B cell (primary cell): ENCODE measurements at regions of chr1 and their contacts with region 1.

Region 1: DNA sequence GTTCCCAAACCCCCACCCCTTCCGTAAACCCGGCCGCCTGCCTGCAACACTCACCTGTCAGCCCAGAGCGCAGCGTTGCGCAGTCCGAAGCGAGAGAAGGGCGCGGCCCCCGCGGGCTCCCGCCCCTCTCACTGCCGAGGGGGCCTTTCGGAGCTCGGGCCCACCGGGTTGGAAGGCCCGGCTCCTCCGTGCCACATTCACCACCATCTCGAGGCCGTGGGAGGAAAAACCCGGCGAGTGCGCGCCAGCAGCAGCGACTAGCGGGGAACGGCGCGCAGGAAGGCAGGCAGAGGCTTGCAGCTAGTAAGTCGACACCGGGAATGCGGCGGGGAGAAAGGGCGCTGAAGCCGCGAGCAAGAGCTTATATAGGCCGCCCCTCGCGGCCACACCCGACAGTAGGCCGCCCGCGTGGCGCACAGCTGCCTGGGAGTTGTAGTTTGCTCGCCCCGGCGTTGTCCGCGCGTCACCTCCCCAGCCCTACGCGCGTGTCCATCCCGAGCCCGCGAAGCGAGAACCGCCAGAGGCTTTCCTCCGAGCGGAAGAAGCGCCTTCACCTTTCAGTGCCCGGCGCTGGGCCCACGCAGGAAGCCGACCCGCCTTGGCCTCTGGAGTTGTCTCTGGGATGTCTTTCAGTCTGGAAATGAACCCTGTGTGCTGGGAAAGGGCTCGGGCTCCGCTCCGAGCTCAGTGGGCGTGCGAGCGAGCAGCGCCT is 10.4 kb upstream of the RAB42 start:
- DNase-seq: peak; percentile 96
- ATAC-seq: peak; percentile 92
- H3K4me3 ChIP-seq: peak overlapping the region; percentile 69 to 99 (median 94)
- H3K4me3 Mint-ChIP-seq: peak overlapping the region; percentile 96
- H3K27ac ChIP-seq: peak overlapping the region; percentile 69 to 82
- H3K27ac Mint-ChIP-seq: peak overlapping the region; percentile 95
- H3K4me1 ChIP-seq: peaks cover 15 to 35% of the 10 kb centered on the region in 2 donors
- H3K4me1 Mint-ChIP-seq: peaks cover 40% of the 10 kb centered on the region
- H3K27me3 ChIP-seq: no peaks in the 10 kb centered on the region
- H3K27me3 Mint-ChIP-seq: no peaks in the 10 kb centered on the region
- CTCF ChIP-seq: peak; percentile 7

Region 2: GRCh38 chr1:28329395-28330153 is 252.1 kb before region 1 on chr1:
- CTCF ChIA-PET with region 1: interaction called, 3 read pairs
- POLR2A ChIA-PET with region 1: interaction called, 8 read pairs
- intact Hi-C with region 1: loop called (anchors 1 kb)
- DNase-seq: peak; percentile 67
- ATAC-seq: no peak
- H3K4me3 ChIP-seq: peak overlapping the region; percentile 72 to 93 (median 80)
- H3K4me3 Mint-ChIP-seq: peak overlapping the region; percentile 91
- H3K27ac ChIP-seq: peak overlapping the region; percentile 91 to 99
- H3K27ac Mint-ChIP-seq: peak overlapping the region; percentile 99
- H3K4me1 ChIP-seq: peaks cover 34 to 41% of the 10 kb centered on the region in 2 donors
- H3K4me1 Mint-ChIP-seq: peaks cover 45% of the 10 kb centered on the region
- H3K27me3 ChIP-seq: no peaks in the 10 kb centered on the region
- H3K27me3 Mint-ChIP-seq: no peaks in the 10 kb centered on the region
- CTCF ChIP-seq: no peak

Region 3: GRCh38 chr1:28518000-28518744 is 63.5 kb before region 1 on chr1:
- CTCF ChIA-PET with region 1: interaction called, 11 read pairs
- POLR2A ChIA-PET with region 1: interaction called, 5 read pairs
- intact Hi-C with region 1: loop called (anchors 1 kb)
- DNase-seq: peak; percentile 93
- ATAC-seq: peak; percentile 94
- H3K4me3 ChIP-seq: peak overlapping the region; percentile 53 to 68 (median 55)
- H3K4me3 Mint-ChIP-seq: peak overlapping the region; percentile 89
- H3K27ac ChIP-seq: peak overlapping the region in 1 of 2 donors; percentile 45
- H3K27ac Mint-ChIP-seq: peak overlapping the region; percentile 89
- H3K4me1 ChIP-seq: peaks cover 11 to 18% of the 10 kb centered on the region in 2 donors
- H3K4me1 Mint-ChIP-seq: peaks cover 30% of the 10 kb centered on the region
- H3K27me3 ChIP-seq: no peaks in the 10 kb centered on the region
- H3K27me3 Mint-ChIP-seq: no peaks in the 10 kb centered on the region
- CTCF ChIP-seq: peak; percentile 98

Region 4: DNA sequence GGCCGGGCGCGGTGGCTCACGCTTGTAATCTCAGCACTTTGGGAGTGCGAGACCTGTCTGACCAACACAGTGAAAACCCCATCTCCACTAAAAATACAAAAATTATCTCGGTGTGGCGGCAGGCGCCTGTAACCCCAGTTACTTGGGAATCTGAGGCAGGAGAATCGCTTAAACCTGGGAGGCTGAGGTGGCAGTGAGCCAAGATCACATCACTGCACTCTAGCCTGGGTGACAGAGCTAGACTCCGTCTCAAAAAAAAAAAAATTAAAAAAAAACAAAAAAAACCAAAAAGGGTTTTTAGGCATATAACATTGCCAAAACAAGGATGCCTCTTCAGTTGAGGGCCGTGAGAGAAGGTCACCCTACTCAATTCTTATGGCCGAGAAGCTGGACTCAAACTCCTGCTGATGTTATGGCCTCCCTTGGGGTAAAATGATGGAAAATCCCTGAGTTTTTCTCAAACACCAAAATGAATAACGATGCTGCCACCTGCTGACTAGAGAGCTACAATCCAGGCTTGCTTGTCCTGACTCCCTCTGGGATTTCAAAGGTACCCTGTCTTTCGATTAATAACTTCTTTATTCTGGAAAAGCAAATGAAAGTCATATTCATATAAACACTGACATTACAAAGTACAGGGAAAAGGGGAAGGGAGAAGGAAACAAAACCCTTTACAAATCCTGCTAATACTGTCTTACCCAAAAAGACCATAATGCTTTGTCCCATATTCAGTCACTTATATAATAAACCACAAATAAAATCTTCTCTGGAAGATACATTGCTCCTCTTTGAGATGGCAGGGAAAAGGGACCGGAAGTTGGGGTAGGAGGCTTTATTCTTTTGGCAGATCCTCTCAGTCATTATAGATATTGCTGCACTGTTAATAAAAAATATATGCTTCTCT is 21.1 kb after region 1 on chr1:
- CTCF ChIA-PET with region 1: interaction called, 13 read pairs
- POLR2A ChIA-PET with region 1: interaction called, 4 read pairs
- intact Hi-C with region 1: no loop called
- DNase-seq: peak; percentile 57
- ATAC-seq: peak; percentile 28
- H3K4me3 ChIP-seq: no peak overlapping the region
- H3K4me3 Mint-ChIP-seq: no peak overlapping the region
- H3K27ac ChIP-seq: no peak overlapping the region
- H3K27ac Mint-ChIP-seq: no peak overlapping the region
- H3K4me1 ChIP-seq: no peaks in the 10 kb centered on the region
- H3K4me1 Mint-ChIP-seq: no peaks in the 10 kb centered on the region
- H3K27me3 ChIP-seq: no peaks in the 10 kb centered on the region
- H3K27me3 Mint-ChIP-seq: no peaks in the 10 kb centered on the region
- CTCF ChIP-seq: peak; percentile 45

Region 5: DNA sequence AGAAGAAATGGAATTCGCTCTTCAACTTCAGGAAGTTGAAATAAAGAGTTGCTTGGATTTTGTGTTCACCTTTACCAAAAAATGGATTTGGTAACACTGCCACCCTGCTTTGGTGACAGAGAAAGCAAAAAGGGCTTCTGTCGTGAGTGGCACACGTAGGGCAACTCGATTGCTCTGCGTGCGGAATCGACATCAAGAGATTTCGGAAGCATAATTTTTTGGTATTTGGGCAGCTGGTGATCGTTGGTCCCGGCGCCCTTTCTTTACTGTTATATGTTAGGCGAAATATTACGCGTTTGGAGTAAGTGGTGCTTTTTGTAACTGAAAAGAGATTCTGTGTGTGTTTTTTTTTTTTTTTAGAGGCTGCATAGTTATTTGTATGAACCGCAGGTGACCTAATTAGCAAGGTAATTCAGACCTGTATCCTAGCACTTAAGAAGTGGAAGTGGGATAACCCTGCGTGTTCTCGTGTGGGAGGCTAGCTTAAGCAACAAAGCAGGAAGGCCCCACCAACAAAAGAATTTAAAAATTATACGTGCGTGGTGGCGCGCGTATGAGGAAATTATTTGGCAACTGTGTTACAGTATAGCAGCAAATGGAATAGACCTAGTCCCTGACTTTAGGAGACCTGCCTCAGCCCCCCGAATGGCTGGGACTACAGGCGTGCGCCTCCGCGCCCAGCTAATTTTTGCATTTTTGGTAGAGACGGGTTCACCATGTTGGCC is 66.9 kb after region 1 on chr1 and contains the start of gene RNU11:
- CTCF ChIA-PET with region 1: interaction called, 6 read pairs
- POLR2A ChIA-PET with region 1: interaction called, 36 read pairs
- intact Hi-C with region 1: loop called (anchors 1 kb)
- DNase-seq: peak; percentile 98
- ATAC-seq: peak; percentile 72
- H3K4me3 ChIP-seq: peak within 1 kb of the TSS; percentile 9 to 60 (median 53)
- H3K4me3 Mint-ChIP-seq: peak within 1 kb of the TSS; percentile 94
- H3K27ac ChIP-seq: peak within 1 kb of the TSS; percentile 93 to 100
- H3K27ac Mint-ChIP-seq: peak within 1 kb of the TSS; percentile 100
- H3K4me1 ChIP-seq: peaks cover 25 to 33% of the 10 kb centered on the region in 2 donors
- H3K4me1 Mint-ChIP-seq: peaks cover 32% of the 10 kb centered on the region
- H3K27me3 ChIP-seq: no peaks in the 10 kb centered on the region
- H3K27me3 Mint-ChIP-seq: no peaks in the 10 kb centered on the region
- CTCF ChIP-seq: no peak
- total RNA-seq, gene RNU11: not detected in 2 replicates

Region 6: DNA sequence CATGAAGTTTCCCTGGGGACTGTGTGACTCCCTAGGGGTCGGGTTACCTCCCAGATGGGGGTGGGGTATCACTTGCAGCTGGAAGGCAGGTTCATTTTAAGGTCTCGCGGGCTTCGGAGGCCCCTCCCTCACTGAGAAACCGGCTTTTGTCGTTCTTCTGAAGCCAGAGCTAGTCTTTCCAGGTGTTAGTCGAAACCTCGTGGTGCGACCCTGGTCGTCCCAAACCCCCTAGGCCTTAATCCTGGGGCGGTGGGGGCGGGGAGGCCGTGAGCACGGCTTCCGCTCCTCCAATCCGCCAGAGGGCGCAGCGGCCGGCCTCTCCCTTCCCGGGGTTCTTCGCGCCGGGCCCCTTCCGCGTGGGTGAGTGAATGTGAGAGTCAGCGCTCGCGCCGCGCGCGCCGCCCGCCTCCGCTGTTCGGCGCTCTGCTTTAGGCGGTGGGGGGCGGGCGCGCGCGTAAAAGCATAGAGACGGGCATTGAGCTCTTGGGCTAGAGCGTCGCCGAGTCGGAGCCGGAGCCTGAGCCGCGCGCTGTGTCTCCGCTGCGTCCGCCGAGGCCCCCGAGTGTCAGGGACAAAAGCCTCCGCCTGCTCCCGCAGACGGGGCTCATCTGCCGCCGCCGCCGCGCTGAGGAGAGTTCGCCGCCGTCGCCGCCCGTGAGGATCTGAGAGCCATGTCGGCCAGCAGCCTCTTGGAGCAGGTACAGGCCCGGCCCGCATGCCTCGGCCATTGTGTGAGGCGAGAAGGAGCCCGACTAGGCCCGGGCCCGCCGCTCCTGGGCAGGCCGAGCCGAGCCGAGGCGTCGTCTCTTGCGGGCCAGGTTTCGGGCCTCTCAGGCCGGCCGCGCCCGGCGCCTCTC is 155.0 kb after region 1 on chr1 and contains the start of gene YTHDF2:
- CTCF ChIA-PET with region 1: interaction called, 8 read pairs
- POLR2A ChIA-PET with region 1: interaction called, 19 read pairs
- intact Hi-C with region 1: loop called (anchors 1 kb)
- DNase-seq: peak; percentile 99
- ATAC-seq: peak; percentile 91
- H3K4me3 ChIP-seq: peak within 1 kb of the TSS; percentile 75 to 91 (median 84)
- H3K4me3 Mint-ChIP-seq: peak within 1 kb of the TSS; percentile 95
- H3K27ac ChIP-seq: peak within 1 kb of the TSS; percentile 92 to 94
- H3K27ac Mint-ChIP-seq: peak within 1 kb of the TSS; percentile 95
- H3K4me1 ChIP-seq: peaks cover 16 to 23% of the 10 kb centered on the region in 2 donors
- H3K4me1 Mint-ChIP-seq: peaks cover 39% of the 10 kb centered on the region
- H3K27me3 ChIP-seq: no peaks in the 10 kb centered on the region
- H3K27me3 Mint-ChIP-seq: no peaks in the 10 kb centered on the region
- CTCF ChIP-seq: peak; percentile 91
- total RNA-seq, gene YTHDF2: 58.8 and 73.0 TPM in 2 replicates